Posterior cingulate gyrus (tissue), 11 donors: ENCODE measurements at regions of chr12 and their contacts with region 1.

Region 1: GRCh38 chr12:130013771-130014484 is 110.1 kb upstream of the TMEM132D start:
- DNase-seq: peak; percentile 79 to 97 (median 88)

Region 2: DNA sequence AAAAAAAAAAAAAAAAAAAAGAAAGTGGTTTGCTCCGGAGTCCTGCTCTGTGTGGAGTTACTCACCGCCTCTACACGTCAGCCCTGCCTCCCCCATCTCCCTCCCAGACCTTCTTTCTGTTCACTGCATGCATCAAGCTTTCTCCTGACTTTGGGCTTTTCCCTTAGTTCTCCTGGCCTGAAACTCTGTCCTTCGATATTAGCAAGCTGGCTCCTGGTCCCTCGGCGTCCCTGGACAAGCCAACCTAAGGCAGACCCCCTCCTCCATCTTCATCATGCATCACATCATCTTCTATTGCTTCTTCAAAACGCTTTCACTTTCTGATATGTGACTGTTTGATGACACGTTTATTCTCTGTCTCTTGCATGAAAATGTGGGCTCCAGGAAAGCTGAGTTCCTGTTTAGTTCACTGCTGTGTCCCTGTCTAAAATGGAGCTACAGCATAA is 1230.8 kb before region 1 on chr12:
- intact Hi-C with region 1: loop called (anchors 5 kb)
- DNase-seq: no peak

Region 3: DNA sequence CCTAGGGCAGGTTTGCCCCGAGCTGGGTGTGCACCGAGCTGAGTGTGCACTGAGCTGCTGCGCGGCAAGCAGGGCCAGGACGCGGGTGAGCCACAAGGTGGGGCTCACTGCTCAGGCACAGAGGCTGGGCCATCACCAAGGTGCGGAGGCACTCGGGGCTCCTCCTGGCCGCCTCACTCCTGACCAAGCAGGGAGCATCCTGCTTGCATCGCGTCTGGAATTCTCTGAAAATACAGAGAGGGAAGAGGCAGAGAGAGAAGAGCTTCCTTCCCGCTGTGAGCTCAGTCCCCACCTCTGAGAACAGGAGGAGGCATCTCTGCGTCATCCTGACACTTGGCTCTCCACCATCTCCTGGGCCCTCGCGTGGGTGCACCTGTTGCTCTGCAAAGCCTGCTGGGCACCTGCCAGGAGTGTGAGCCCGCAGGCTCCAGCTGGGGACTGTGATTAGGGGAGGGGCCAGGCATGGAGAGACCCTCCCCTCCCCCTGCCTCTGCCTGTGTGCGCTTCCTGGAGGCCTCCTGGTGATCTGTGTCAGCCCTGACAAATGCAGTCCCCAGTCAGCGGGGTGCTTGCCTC is 1044.4 kb before region 1 on chr12:
- intact Hi-C with region 1: loop called (anchors 5 kb)
- DNase-seq: peak; percentile 36 to 96 (median 80)

Region 4: GRCh38 chr12:129900306-129900705 is 113.6 kb before region 1 on chr12:
- intact Hi-C with region 1: no loop called
- DNase-seq: peak in 1 of 10 donors; percentile 49